ENCODE measurements at regions of chrX and their contacts with region 1.

Region 1: DNA sequence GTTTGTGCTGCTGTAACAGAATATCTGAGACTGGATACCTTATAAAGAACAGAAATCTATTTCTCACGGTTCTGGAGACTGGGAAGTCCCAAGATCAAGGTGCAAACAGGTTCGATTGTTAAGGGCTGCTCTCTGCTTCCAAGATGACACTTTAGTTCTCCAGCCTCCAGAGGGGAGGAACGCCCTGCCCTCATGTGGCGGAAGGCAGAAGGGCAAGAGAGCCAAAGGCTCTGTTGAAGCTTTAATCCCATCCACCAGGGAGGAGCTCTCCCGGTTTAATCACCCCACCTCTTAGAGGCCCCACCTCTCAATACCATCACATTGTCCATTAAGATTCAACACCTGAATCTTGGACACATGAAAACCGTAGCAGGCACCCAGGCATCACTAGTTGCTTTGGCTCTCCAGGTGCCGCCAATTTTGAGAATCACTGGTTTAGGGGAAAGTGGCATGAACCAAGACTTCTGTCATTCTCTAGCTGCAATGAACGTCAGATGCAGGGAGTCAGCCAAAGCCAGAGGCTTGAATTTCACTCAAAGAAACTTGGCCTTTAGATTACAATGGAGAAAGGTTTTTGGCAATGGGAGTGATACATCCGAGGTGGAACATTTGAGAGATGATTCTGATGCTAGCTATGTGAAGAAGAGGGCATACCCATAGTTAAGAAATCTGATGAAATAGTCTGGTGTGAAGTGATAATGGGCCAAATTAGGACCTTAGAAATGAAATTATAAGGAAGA is 15.7 kb downstream of the FHL1 start:
- DNase-seq: peak; percentile 67
- ATAC-seq: peak; percentile 71

Region 2: DNA sequence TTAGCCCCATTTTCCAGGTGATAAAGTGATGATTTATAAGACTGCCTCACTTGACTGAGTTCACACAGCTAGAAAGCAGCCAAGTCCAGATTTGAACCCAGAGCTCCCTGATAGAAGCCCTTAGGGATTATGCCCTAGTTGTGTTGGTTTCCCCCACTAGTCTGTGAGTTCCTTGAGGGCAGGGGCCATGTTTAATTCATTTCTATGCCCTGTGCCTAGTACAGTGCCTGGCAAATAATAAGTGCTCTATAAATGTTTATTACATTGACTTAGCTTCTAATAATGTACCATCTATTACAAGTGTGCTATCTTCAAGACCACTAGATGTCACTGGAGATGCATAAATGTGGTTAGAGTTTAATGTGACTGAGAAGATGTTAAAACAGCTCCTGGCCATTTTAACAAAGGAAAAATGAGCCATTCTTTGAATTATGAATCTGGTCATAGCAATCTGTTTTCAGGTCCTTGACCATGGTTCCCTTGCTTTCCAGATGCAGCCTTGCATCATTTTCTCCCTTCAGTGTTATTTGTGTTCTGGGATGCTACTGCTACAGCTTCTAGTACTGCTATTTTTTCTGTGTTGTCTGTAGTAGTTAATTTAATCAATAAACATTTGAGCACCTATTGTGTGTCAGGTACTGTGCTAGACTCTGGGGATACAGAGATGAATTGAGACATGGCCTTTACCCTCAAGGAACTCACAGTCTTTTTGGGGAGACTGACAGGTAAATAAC is 134.6 kb before region 1 on chrX:
- intact Hi-C with region 1: loop called (anchors 2 kb)
- DNase-seq: no peak
- ATAC-seq: peak; percentile 56

Region 3: GRCh38 chrX:136268051-136269048 is 105.3 kb after region 1 on chrX:
- intact Hi-C with region 1: loop called (anchors 10 kb)
- DNase-seq: no peak
- ATAC-seq: peak; percentile 73